ENCODE measurements at regions of chr2 and their contacts with region 1.

Region 1: DNA sequence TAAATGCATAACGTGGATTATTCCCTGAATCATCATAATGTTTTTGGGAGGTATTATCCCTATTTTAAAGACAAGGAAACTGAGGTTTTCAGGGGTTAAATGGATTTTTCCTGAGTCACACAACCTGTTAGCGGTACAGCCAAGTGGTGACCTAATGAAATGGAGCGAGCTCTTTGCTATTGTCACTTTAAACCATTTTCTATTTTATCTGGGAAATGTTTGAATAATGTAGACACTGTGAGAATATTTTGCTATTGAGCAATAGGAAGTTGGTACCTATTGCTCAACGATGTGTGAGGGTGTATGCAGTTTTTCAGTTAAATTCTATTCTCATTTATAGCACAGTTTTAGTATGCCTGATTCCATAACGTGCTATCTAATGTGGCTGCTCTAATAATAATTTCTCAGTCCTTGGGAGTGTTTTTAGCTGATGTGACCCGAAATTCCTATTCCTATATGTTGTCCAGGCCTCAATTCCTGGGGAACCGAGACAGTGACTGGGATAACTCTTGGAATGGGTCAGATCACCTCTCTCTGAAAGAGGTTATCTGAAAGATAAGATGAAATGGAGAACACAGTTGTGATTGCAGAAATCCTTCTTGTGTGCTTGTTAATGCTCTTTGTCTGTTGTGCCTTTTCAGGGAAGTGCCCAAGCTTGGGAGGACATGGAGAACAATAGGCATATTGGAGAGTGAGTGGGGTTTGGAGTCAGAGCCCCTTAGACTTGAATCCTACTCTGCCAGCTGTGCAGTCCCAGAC is 38.4 kb downstream of the ABCB11 start:
- DNase-seq: no peak
- CTCF ChIP-seq: no peak

Region 2: DNA sequence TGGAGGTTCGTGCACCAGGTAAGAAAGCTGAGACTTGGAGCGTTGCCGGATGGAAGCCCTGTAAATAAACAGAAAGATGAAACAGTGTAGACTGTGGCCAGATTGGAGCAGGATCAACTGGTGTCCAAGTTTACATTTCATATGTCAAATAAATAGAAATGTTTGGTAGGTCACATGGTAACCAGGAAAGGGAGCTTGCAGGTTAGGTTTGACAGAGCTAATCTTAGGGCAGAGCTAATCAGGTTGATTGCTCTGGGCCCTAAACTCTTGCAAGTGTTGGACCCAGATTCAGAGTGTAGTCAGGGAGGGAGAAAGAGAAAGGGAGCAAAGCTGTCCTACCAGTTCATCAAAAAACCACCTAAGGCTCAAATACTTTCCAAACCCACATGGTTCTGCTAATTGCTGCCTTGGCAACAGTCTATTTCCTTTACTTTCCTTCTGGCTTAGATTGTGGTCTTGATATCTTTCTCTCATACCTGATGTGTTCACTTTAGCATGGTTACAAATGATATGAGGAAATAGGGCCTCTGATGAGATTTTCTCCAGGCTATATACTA is 28.4 kb before region 1 on chr2:
- CTCF ChIA-PET with region 1: no interaction called
- POLR2A ChIA-PET with region 1: no interaction called
- DNase-seq: no peak
- CTCF ChIP-seq: no peak

Region 3: DNA sequence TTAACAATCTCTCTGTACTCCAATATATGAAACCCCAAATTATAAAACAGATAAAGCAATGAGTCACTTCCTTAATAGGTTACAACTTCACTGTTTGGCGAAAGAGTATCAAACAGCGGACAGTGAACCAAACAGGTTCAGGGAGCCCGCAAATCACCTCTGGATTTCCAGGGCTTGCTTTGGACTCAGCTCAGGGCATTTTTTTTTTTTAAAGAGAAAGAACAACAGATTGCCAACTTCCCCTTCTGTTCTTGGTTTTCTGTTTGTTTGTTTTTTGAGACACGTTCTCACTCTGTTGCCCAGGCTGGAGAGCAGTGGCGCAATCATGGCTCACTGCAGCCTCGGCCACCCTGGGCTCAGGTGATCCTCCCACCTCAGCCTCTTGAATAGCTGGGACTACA is 14.3 kb before region 1 on chr2:
- CTCF ChIA-PET with region 1: interaction called, 11 read pairs
- POLR2A ChIA-PET with region 1: no interaction called
- DNase-seq: no peak
- CTCF ChIP-seq: no peak

Region 4: GRCh38 chr2:169159686-169160085 is 166.9 kb after region 1 on chr2:
- CTCF ChIA-PET with region 1: no interaction called
- POLR2A ChIA-PET with region 1: no interaction called
- DNase-seq: no peak
- CTCF ChIP-seq: no peak

Region 5: DNA sequence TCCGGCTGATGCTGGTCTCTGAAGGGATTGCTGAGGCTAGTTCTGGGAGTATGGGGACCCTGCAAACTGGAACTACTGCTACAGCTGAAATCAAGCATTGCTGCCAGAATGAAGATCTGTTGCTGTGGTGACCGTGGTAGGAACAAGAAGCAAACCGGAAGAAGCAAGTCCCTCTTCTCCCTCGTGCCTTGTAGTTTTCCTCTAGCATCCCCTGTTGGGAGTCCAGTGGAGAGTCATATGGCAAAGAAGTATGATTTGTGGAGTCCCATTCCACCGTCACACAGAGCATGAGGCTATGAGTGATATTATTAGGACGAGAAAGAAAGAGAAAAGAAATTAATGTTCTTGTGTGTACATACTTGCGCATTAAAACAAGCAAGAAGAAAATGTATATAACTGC is 1583.5 kb after region 1 on chr2:
- CTCF ChIA-PET with region 1: no interaction called
- POLR2A ChIA-PET with region 1: no interaction called
- DNase-seq: no peak
- CTCF ChIP-seq: no peak

Measured in GM10248 (cell line).